ENCODE measurements at regions of chr12 and their contacts with region 1.

Region 1: GRCh38 chr12:74317078-74317601 is 220.5 kb upstream of the ATXN7L3B start:
- DNase-seq: no peak
- ATAC-seq: peak; percentile 97

Region 2: DNA sequence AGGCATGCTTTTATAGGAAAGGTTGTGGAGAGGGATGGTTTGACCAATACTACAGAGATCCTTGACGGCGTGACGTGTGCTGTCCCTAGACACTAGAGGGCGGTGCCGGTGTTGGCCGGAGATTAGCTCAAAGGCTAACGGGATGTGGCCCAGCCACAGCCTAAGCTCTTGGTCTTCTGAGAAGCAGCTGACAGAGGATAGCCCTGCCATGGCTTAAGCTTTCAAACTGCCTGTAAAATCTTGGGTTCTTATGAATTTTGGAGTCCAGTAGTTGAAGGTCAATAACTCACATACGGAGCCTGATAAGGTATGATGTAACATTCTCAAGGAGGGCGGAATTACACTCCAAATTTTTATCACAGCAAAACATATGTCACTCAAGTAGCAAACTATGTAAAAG is 295.2 kb before region 1 on chr12:
- intact Hi-C with region 1: loop called (anchors 5 kb)
- DNase-seq: no peak
- ATAC-seq: peak; percentile 84